ENCODE measurements at regions of chr3 and their contacts with region 1.

Region 1: DNA sequence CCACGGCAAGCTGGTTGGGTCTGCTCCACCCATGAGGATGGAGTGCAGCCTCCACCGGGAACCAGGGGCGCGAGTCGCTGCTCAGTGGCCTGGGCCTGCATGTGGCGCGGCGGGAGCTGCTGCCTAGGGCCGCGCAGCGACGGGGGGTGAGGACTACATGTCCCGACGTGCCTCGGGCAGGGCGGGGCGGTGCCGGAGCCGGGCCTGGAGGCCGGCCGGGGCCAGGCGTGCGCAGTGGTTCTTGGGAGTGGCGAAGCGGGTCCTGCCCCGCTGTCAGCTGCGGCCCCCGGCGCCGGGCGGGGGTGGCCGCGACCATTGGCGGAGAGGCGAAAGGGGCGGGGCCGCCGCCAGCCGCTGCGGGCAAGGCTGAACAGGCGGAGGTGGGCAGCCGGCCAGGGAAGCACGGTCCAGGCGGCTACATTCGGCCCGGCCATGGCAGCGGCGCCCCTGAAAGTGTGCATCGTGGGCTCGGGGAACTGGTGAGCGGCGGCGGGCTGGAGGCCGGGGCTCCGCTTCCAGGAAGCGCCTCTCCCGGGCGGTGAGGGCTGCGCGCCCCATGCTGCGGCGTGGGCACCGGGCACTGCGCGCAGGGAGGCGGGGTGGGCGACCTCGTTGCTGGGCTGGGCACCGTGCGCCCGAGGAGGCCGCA is at the start of gene GPD1L:
- DNase-seq: peak; percentile 96 to 98
- ATAC-seq: peak; percentile 88 to 96 (median 93)
- H3K4me3 ChIP-seq: peak within 1 kb of the TSS; percentile 89
- H3K27ac ChIP-seq: peak within 1 kb of the TSS; percentile 96
- H3K4me1 ChIP-seq: peaks cover 42% of the 10 kb centered on the region
- H3K27me3 ChIP-seq: no peaks in the 10 kb centered on the region
- CTCF ChIP-seq: no peak
- total RNA-seq, gene GPD1L: 99.4 to 135 (median 128) TPM

Region 2: DNA sequence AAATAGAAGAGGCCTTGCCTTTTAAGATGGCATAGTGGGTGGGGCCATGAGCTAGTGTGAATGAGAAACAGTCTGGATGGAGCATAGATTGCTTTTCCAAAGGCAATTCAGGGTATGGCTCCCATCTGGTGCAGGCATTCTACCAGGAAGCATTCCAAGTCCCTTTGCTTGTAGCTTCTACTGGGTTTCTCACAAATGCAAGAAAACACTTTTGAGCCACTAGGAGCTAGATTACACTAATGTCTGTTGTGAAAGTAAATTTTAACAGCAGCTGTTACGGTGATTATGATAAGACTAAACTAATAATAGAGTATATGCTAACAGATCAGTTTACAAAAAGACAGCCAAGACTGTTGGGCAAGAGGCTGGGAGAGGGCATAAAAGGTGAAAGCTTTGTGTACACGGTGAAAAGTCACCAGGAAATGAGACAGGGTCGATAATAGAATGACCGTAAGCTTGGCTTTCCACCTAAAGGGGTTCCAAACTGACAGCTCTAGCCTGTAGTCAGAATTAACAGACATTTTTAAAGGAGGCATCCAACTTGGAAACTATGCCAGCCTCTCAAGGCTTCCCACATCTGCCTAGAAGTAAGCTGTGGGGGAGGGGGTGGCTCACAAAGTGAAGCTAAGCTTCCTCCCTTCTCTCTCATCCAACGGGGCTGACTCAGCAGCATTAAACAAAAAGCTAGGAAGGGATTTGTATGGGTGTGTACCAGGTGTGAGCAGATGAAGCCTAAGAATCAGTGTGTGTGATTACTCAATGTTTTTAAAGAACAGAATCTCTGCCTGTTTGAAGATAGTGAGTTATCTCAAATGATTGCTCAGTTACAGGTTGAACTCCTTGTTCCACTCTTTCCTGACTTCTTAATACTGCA is 61.1 kb before region 1 on chr3:
- intact Hi-C with region 1: loop called (anchors 2 to 5 kb)
- DNase-seq: no peak
- ATAC-seq: peak; percentile 94 to 97 (median 96)
- H3K4me3 ChIP-seq: peak overlapping the region; percentile 30
- H3K27ac ChIP-seq: peak overlapping the region; percentile 85
- H3K4me1 ChIP-seq: peaks cover 18% of the 10 kb centered on the region
- H3K27me3 ChIP-seq: no peaks in the 10 kb centered on the region
- CTCF ChIP-seq: peak; percentile 10

Region 3: GRCh38 chr3:32249184-32249782 is 142.9 kb after region 1 on chr3:
- intact Hi-C with region 1: no loop called
- DNase-seq: no peak
- ATAC-seq: no peak
- H3K4me3 ChIP-seq: no peak overlapping the region
- H3K27ac ChIP-seq: no peak overlapping the region
- H3K4me1 ChIP-seq: no peaks in the 10 kb centered on the region
- H3K27me3 ChIP-seq: no peaks in the 10 kb centered on the region
- CTCF ChIP-seq: no peak

Region 4: DNA sequence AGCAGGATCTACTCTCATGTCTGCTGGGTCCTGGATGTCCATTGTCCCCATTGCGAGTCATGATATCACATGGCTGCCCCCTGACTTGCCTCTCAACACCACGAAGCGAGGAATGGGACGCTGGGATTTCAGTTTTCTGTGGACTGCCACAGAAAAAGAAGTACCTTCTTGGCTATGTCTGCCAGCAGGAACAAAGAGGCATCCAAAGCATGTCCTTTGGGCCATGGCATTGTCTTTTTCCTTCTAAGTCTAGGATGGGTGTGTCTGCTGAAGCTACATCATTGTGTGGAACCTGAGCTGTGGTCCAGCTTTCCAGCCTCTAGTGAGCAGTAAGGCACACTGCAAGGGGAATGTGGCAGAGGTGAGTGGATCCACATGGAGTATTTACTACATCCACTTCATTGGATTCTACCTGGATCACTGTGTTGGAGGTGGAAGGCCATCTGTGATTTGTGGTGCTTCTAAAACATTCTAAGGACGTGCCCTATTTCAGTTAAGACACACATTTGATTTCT is 155.7 kb after region 1 on chr3:
- intact Hi-C with region 1: no loop called
- DNase-seq: no peak
- ATAC-seq: no peak
- H3K4me3 ChIP-seq: no peak overlapping the region
- H3K27ac ChIP-seq: no peak overlapping the region
- H3K4me1 ChIP-seq: no peaks in the 10 kb centered on the region
- H3K27me3 ChIP-seq: no peaks in the 10 kb centered on the region
- CTCF ChIP-seq: no peak